ENCODE measurements at regions of chr13 and their contacts with region 1.

Region 1: DNA sequence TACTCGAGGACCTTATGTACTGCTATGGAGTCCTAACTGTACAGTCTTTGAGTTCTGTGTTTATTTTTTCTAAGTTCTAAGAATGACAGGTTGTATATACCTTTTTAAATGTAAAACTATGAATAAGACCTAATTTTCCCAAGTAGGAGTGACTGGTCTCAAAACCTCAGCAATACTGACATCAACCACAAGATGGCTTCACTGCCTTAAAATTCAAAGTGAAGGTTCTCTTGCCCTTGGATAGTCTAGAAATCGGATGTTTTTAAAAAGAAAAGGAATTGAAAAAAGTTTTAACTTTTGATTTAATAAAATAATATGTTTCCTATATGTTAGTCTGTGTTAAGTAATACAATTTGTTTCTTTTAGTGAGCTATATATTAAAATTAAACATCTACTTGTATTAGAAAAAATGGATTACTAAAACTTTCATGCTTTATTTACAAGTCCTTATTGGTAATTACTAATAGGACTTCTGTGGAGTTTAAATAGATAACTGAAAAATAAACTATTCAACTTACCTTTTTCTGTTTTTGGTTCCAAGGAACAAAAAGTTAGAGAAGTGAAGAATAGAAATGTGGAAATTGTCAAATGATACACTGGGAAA is 52.0 kb downstream of the TDRD3 start:
- DNase-seq: peak; percentile 12
- ATAC-seq: peak; percentile 58
- H3K4me3 Mint-ChIP-seq: no peak overlapping the region
- H3K27ac Mint-ChIP-seq: no peak overlapping the region
- H3K4me1 Mint-ChIP-seq: no peaks in the 10 kb centered on the region
- H3K27me3 Mint-ChIP-seq: no peaks in the 10 kb centered on the region
- CTCF ChIP-seq: peak; percentile 71

Region 2: DNA sequence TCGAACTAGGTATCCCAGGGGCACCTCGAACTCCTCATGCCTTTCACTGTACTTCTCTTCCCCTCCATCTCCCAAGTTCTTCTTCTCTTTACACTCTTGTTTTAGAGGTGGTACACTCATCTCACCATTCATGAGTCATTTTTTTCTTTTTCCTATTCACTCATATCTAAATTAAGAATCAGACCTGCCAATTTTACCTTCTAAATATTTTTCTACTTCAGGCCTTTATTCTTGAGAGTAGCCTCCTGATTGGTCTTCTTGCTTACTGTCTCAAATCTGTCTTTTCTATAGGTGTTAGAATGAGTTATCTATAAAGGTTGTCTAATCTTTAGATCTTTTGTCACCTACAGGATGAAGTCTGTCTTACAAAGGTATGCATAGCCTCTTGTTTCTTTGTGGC is 31.3 kb before region 1 on chr13:
- CTCF ChIA-PET with region 1: no interaction called
- POLR2A ChIA-PET with region 1: no interaction called
- intact Hi-C with region 1: no loop called
- DNase-seq: no peak
- ATAC-seq: peak; percentile 78
- H3K4me3 Mint-ChIP-seq: no peak overlapping the region
- H3K27ac Mint-ChIP-seq: peak overlapping the region; percentile 56
- H3K4me1 Mint-ChIP-seq: peaks cover 20% of the 10 kb centered on the region
- H3K27me3 Mint-ChIP-seq: no peaks in the 10 kb centered on the region
- CTCF ChIP-seq: no peak

Region 3: DNA sequence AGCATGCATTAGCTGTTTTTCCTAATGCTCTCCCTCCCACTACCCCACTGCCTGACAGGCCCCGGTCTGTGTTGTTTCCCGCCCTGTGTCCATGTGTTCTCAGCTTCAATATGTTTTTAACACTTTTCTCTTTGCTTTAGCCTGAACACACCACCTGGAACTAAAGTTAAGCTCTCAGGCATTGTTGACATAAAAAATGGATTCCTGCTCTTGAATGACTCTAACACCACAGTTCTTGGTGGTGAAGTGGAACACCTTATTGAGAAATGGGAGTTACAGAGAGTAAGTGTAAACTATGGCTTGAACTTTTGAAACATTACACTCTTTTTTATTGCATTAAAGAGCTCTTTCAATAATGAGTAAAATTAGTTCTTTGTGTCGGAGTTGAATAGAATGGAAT is 18.1 kb after region 1 on chr13:
- CTCF ChIA-PET with region 1: interaction called, 10 read pairs
- POLR2A ChIA-PET with region 1: interaction called, 3 read pairs
- intact Hi-C with region 1: no loop called
- DNase-seq: no peak
- ATAC-seq: no peak
- H3K4me3 Mint-ChIP-seq: no peak overlapping the region
- H3K27ac Mint-ChIP-seq: no peak overlapping the region
- H3K4me1 Mint-ChIP-seq: no peaks in the 10 kb centered on the region
- H3K27me3 Mint-ChIP-seq: no peaks in the 10 kb centered on the region
- CTCF ChIP-seq: no peak

Measured in activated CD8-positive, alpha-beta T cell treated with anti-CD3 and anti-CD28 coated beads for 36 hours (primary cell).